Left ventricle myocardium inferior (tissue), 1 donor: ENCODE measurements at regions of chr5 and their contacts with region 1.

Region 1: DNA sequence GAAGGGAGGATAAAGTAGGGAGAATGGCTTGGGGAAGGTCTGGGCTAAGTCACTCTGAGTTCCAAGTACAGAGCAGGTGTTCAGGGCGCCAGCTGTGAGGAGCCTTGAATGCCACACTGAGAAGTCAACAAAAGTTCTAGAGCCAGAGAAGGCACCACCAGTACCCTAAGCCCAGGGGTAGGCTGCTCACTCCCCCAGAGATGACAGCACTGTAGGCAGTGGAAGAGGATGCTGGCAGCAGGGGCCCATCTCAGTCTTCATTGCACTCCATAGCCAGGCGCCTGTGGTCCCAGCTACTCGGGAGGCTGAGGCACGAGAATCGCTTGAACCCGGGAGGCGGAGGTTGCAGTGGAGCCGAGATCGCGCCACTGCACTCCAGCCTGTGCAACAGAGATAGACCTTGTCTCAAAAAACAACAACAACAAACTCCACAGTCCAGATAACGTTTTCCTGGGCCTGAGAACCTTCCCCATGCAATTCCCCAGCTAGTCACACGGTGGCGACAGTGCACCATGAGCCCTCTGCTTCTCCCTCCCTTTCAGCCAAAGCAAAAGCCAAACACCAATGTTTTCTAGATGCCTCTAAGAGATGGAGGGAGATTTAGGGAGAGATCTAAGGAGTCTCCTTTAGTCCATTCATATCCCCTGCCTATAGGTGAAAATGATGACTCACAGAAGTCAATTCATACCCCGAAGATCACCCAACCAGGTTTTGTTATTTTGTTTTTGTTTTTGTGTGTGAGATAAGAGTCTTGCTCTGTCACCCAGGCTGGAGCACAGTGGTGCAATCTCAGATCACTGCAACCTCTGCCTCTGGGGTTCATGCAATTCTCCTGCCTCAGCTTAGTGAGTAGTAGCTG is 19.8 kb upstream of the NSD1 start:
- DNase-seq: peak; percentile 75
- H3K4me3 ChIP-seq: peak overlapping the region; percentile 42
- H3K27ac ChIP-seq: peak overlapping the region; percentile 71
- H3K4me1 ChIP-seq: peaks cover 33% of the 10 kb centered on the region
- H3K27me3 ChIP-seq: no peaks in the 10 kb centered on the region
- CTCF ChIP-seq: peak; percentile 99

Region 2: GRCh38 chr5:176762489-176762888 is 351.3 kb before region 1 on chr5:
- intact Hi-C with region 1: no loop called
- DNase-seq: no peak
- H3K4me3 ChIP-seq: no peak overlapping the region
- H3K27ac ChIP-seq: no peak overlapping the region
- H3K4me1 ChIP-seq: no peaks in the 10 kb centered on the region
- H3K27me3 ChIP-seq: peaks cover 46% of the 10 kb centered on the region
- CTCF ChIP-seq: no peak

Region 3: GRCh38 chr5:177071666-177072385 is 42.0 kb before region 1 on chr5:
- intact Hi-C with region 1: loop called (anchors 5 kb)
- DNase-seq: no peak
- H3K4me3 ChIP-seq: no peak overlapping the region
- H3K27ac ChIP-seq: no peak overlapping the region
- H3K4me1 ChIP-seq: peaks cover 5% of the 10 kb centered on the region
- H3K27me3 ChIP-seq: no peaks in the 10 kb centered on the region
- CTCF ChIP-seq: peak; percentile 92

Region 4: DNA sequence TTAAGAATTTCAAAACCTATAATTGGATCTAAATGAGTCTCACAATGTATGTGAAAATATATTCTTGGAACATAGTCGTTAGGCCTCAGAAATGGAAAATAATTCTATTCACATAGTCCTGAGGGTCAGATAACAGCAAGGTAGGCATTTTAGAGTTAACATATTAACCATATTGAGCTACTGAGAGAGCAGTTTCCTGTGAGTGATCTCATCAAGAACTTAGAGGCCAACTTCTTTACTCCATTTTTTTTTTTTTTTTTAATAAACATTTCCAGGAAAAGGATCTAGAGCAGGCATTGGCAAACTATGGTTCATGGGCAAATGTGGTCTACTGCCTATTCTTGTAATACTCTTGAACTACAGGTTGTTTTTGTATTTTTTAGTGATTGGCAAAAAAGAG is 163.1 kb after region 1 on chr5:
- intact Hi-C with region 1: loop called (anchors 10 kb)
- DNase-seq: no peak
- H3K4me3 ChIP-seq: no peak overlapping the region
- H3K27ac ChIP-seq: no peak overlapping the region
- H3K4me1 ChIP-seq: no peaks in the 10 kb centered on the region
- H3K27me3 ChIP-seq: no peaks in the 10 kb centered on the region
- CTCF ChIP-seq: no peak